H1 (cell line): ENCODE measurements at regions of chr3 and their contacts with region 1.

Region 1: DNA sequence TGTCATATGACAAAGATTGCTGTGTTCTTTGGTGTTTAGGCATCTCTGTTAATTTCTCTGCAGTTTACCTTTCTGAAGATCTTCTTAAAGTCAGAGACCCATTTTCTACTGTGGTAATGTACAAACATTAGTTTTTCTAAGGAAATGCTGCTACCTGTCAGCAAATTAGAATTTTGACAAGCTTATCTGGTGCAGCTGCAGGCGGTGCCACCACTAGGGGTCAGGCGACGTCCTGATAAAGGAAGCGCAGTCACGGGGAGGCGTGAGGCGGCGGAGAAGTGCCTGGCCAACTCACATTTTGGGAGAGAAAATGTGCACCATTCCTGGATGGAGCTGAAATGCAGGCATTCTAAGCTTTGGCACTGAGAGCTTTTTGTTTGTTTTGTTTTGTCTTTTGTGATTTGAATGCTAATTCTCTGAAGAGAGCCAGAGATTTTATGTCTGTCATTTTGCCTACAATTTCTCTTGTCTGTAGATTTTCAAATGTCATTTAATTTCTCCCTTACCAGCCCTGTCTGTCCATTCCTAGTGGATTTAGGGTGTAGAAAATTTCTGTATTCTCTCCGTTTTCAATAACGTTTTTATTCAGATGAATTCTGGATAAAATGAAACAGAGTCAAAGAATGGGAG is 24.9 kb upstream of the SIAH2 start:
- DNase-seq: peak in 1 of 2 experiments; percentile 93
- H3K4me3 ChIP-seq: no peak overlapping the region
- H3K27ac ChIP-seq: no peak overlapping the region
- H3K4me1 ChIP-seq: no peaks in the 10 kb centered on the region
- H3K27me3 ChIP-seq: no peaks in the 10 kb centered on the region; a peak in 1 of 7 replicates
- CTCF ChIP-seq: peak; percentile 95 to 96 (median 96)
- EP300 ChIP-seq: no peak
- POLR2A ChIP-seq: no peak
- RAD21 ChIP-seq: peak; percentile 98 to 99

Region 2: DNA sequence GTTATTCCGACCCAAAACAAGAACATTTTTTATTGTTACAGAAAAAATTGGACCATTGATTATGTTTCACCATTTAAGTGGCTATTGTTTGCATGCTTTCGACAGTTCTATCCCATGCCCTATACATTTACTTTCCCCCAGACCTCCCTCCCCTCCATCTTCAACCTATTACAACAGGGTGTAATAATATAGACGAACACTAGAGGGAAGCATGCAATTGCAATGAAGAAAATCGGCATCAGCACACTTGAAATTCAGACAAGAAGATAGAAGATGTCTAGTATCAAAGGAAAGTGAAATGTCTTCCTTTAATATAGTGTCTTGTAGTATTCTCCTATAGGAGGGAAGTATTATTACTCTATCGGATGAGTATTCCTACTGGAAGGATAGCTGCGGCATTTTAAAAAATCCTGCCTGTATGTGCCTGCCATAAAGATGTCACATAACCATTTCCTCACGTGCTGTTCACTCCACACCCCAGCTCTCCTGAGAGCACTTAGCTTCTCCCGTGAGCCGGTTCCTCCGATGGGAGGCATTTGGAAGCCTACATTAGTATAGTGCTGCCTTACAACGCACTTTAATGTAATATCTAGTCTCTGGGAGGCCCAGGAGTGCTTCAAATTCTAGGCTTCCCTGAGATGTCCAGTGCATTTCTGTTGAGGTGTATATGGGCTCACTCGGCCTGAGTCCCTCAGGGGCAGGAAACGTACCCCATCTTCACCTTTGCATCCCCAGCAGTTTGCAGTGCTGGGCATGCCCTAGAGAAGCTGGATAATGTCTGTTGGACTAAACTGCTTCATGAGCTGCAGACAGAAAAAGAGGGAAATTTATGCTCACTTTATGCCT is 66.3 kb before region 1 on chr3:
- CTCF ChIA-PET with region 1: interaction called, 10 read pairs
- POLR2A ChIA-PET with region 1: no interaction called
- DNase-seq: no peak
- H3K4me3 ChIP-seq: no peak overlapping the region
- H3K27ac ChIP-seq: no peak overlapping the region
- H3K4me1 ChIP-seq: no peaks in the 10 kb centered on the region
- H3K27me3 ChIP-seq: no peaks in the 10 kb centered on the region
- CTCF ChIP-seq: peak in 2 of 3 experiments; percentile 51 to 69; a peak in 2 of 4 replicates
- EP300 ChIP-seq: no peak
- POLR2A ChIP-seq: no peak
- RAD21 ChIP-seq: peak; percentile 88 to 92

Region 3: DNA sequence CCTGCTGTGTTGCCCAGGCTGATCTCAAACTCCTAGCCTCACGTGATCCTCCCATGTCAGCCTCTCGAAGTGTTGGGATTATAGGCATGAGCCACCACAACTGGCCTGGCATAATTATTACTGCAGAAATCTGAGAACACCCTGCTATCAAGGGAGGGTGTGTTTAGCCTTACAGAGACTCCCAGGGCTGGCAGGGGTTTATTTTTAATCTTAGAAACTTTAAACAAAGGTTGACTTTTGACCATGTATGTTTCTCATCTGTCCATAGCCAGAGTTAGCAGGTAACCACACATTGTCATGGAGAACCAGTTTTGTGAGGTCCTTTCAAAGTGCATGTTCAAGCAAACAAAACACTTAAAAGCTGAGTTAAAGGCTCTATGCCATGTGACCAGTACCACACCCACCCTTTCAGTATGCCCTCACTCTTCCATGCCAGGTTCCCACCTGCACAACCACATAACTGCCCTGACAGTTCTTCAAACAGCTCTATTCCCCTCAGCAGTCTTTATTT is 36.0 kb before region 1 on chr3:
- CTCF ChIA-PET with region 1: no interaction called
- POLR2A ChIA-PET with region 1: no interaction called
- DNase-seq: no peak
- H3K4me3 ChIP-seq: no peak overlapping the region
- H3K27ac ChIP-seq: no peak overlapping the region
- H3K4me1 ChIP-seq: peaks cover 0 to 2% (median 0%) of the 10 kb centered on the region in 4 experiments; a peak in 2 of 7 replicates
- H3K27me3 ChIP-seq: no peaks in the 10 kb centered on the region
- CTCF ChIP-seq: no peak
- EP300 ChIP-seq: no peak
- POLR2A ChIP-seq: no peak
- RAD21 ChIP-seq: no peak

Region 4: DNA sequence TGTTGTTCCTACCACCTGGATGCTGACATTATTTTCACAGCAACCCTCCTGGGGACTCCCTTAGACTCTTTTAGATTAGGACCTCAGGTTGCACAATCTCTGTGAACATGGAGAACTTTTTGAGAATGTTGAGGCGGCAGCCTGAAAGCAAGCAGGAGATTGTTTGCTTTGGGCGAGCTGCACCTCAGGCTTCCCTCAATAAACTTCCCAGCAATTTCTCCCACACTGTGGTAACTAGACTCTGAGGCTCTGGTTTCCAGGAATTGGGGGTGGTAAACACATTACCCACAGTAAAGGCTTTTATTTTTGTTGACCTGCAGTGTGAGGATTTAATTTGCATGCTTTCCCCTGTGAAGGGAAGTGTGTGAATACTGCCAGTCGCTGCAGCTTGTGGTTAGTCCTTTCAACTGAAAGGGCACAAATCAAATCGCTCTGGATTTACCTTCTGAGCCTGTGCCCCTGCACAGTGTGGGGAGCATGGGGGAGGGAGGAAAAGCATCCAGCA is 10.3 kb after region 1 on chr3:
- CTCF ChIA-PET with region 1: interaction called, 25 read pairs
- POLR2A ChIA-PET with region 1: no interaction called
- DNase-seq: no peak
- H3K4me3 ChIP-seq: peak overlapping the region in 1 of 4 experiments; percentile 9; a peak in 1 of 8 replicates
- H3K27ac ChIP-seq: no peak overlapping the region; the same call in 1 of the 2 replicates
- H3K4me1 ChIP-seq: peaks cover 0 to 5% (median 0%) of the 10 kb centered on the region in 4 experiments; a peak in 1 of 7 replicates
- H3K27me3 ChIP-seq: no peaks in the 10 kb centered on the region
- CTCF ChIP-seq: no peak
- EP300 ChIP-seq: no peak
- POLR2A ChIP-seq: no peak
- RAD21 ChIP-seq: no peak

Region 5: GRCh38 chr3:150830094-150830681 is 42.3 kb after region 1 on chr3:
- CTCF ChIA-PET with region 1: interaction called, 104 read pairs
- POLR2A ChIA-PET with region 1: no interaction called
- DNase-seq: no peak
- H3K4me3 ChIP-seq: no peak overlapping the region
- H3K27ac ChIP-seq: no peak overlapping the region
- H3K4me1 ChIP-seq: no peaks in the 10 kb centered on the region; a peak in 1 of 7 replicates
- H3K27me3 ChIP-seq: no peaks in the 10 kb centered on the region; a peak in 1 of 7 replicates
- CTCF ChIP-seq: peak in 2 of 3 experiments; percentile 55 to 57; a peak in 3 of 4 replicates
- EP300 ChIP-seq: no peak
- POLR2A ChIP-seq: no peak
- RAD21 ChIP-seq: peak; percentile 46

Region 6: DNA sequence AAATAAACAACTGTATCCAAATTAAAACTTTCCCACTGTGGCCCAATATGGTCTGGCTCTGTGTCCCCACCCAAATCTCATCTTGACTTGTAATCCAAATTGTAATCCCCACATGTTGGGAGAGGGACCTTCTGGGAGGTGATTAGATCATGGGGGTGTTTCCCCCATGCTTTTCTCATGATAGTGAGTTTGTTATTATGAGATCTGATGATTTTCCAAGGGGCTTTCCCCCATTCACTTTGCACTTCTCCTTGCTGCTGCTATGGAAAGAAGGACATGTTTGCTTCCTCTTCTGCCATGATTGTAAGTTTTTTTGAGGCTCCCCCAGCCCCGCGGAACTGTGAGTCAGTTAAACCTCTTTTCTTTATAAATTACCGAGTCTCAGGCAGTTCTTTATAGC is 62.3 kb after region 1 on chr3:
- CTCF ChIA-PET with region 1: interaction called, 16 read pairs
- POLR2A ChIA-PET with region 1: no interaction called
- DNase-seq: no peak
- H3K4me3 ChIP-seq: no peak overlapping the region
- H3K27ac ChIP-seq: no peak overlapping the region
- H3K4me1 ChIP-seq: peaks cover 0 to 6% (median under 1%) of the 10 kb centered on the region in 4 experiments; a peak in 3 of 7 replicates
- H3K27me3 ChIP-seq: no peaks in the 10 kb centered on the region
- CTCF ChIP-seq: no peak
- EP300 ChIP-seq: no peak
- POLR2A ChIP-seq: no peak
- RAD21 ChIP-seq: no peak

Region 7: DNA sequence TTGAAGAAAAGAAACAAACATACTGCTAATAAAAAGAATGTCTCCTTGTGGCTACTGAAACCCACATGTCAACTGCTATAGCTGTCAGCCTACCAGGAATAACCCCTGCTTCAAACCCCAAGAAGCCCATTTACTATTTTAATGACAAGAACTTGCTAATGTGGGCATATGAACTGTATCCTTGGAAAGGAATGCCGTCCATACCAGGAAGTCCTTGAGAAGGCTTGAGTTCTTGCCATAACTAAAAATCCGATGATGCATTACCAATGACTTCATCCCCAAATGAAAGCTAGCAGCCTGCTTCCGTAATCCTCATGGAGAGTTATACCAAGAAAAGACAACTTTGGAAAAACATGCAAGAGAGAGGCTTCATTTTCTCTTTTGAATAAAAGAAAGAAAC is 82.5 kb after region 1 on chr3:
- CTCF ChIA-PET with region 1: interaction called, 97 read pairs
- POLR2A ChIA-PET with region 1: no interaction called
- DNase-seq: no peak
- H3K4me3 ChIP-seq: no peak overlapping the region
- H3K27ac ChIP-seq: no peak overlapping the region
- H3K4me1 ChIP-seq: no peaks in the 10 kb centered on the region
- H3K27me3 ChIP-seq: no peaks in the 10 kb centered on the region
- CTCF ChIP-seq: no peak
- EP300 ChIP-seq: no peak
- POLR2A ChIP-seq: no peak
- RAD21 ChIP-seq: no peak